Heart left ventricle (tissue), 16 donors: ENCODE measurements at regions of chr5 and their contacts with region 1.

Region 1: GRCh38 chr5:161358446-161358845 is 188.1 kb downstream of the GABRB2 start:
- DNase-seq: no peak
- ATAC-seq: no peak
- H3K4me3 ChIP-seq: no peak overlapping the region
- H3K27ac ChIP-seq: no peak overlapping the region
- H3K4me1 ChIP-seq: no peaks in the 10 kb centered on the region
- H3K27me3 ChIP-seq: no peaks in the 10 kb centered on the region
- CTCF ChIP-seq: no peak
- POLR2A ChIP-seq: no peak

Region 2: DNA sequence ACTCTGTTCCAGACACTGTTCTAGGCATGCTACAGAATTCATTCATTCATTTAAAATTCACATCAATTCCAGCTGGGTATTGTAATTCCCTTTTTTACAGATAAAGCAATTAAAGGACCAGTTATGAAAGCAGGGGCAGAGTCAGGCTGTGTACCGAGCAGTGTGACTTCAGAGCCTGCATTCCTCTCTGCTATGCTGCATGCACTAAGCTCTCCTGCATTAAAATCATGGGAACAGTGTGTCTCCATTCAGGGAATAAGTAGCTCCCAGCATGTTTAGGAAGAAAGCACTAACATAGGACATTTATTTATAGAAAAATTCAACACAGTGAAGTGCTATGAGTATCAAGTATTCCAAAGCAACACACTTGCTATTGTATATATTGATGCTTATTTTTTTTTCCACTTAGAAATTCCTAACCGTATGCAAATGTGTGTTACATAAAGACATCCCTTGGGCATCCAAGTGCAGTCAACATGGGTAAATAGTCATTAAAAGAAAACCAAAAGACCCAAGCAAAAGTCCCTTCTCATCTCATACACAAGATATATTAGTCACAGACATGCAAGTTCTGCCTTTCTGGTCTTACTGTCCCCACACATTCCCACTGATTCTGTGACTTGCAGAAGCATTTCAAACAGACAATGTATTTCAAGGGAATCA is 14.4 kb after region 1 on chr5:
- intact Hi-C with region 1: loop called in 1 of 10 experiments (anchors 1 kb)
- DNase-seq: no peak
- ATAC-seq: no peak
- H3K4me3 ChIP-seq: no peak overlapping the region
- H3K27ac ChIP-seq: no peak overlapping the region
- H3K4me1 ChIP-seq: no peaks in the 10 kb centered on the region
- H3K27me3 ChIP-seq: no peaks in the 10 kb centered on the region
- CTCF ChIP-seq: no peak
- POLR2A ChIP-seq: no peak